ENCODE measurements at regions of chr4 and their contacts with region 1.

Region 1: GRCh38 chr4:4488405-4489404 is 53.1 kb downstream of the STX18 start:
- DNase-seq: peak; percentile 74
- H3K4me3 ChIP-seq: no peak overlapping the region
- H3K27ac ChIP-seq: no peak overlapping the region
- H3K4me1 ChIP-seq: peaks cover 0 to 9% (median 2%) of the 10 kb centered on the region in 4 donors
- H3K27me3 ChIP-seq: no peaks in the 10 kb centered on the region
- CTCF ChIP-seq: peak; percentile 55 to 87 (median 76)
- EP300 ChIP-seq: no peak
- POLR2A ChIP-seq: no peak

Region 2: GRCh38 chr4:4368809-4369580 is 119.7 kb before region 1 on chr4:
- intact Hi-C with region 1: no loop called
- DNase-seq: no peak
- H3K4me3 ChIP-seq: no peak overlapping the region
- H3K27ac ChIP-seq: no peak overlapping the region
- H3K4me1 ChIP-seq: no peaks in the 10 kb centered on the region
- H3K27me3 ChIP-seq: no peaks in the 10 kb centered on the region
- CTCF ChIP-seq: no peak
- EP300 ChIP-seq: no peak
- POLR2A ChIP-seq: no peak

Region 3: GRCh38 chr4:4575273-4576211 is 86.8 kb after region 1 on chr4:
- intact Hi-C with region 1: loop called (anchors 5 kb)
- DNase-seq: peak; percentile 66
- H3K4me3 ChIP-seq: peak overlapping the region; percentile 52 to 82 (median 62)
- H3K27ac ChIP-seq: peak overlapping the region; percentile 43 to 70 (median 54)
- H3K4me1 ChIP-seq: peaks cover 0 to 13% (median 0%) of the 10 kb centered on the region in 4 donors
- H3K27me3 ChIP-seq: no peaks in the 10 kb centered on the region
- CTCF ChIP-seq: peak; percentile 4 to 73 (median 17)
- EP300 ChIP-seq: no peak
- POLR2A ChIP-seq: no peak

Region 4: GRCh38 chr4:4859843-4860802 is 371.4 kb after region 1 on chr4:
- intact Hi-C with region 1: loop called (anchors 10 kb)
- DNase-seq: no peak
- H3K4me3 ChIP-seq: peak overlapping the region; percentile 21 to 65 (median 56)
- H3K27ac ChIP-seq: peak overlapping the region in 2 of 4 donors; percentile 35 to 44
- H3K4me1 ChIP-seq: peaks cover 0 to 60% (median 53%) of the 10 kb centered on the region in 4 donors
- H3K27me3 ChIP-seq: peaks cover 80 to 98% (median 91%) of the 10 kb centered on the region in 3 donors
- CTCF ChIP-seq: no peak
- EP300 ChIP-seq: no peak
- POLR2A ChIP-seq: no peak